ENCODE measurements at regions of chr1 and their contacts with region 1.

Region 1: DNA sequence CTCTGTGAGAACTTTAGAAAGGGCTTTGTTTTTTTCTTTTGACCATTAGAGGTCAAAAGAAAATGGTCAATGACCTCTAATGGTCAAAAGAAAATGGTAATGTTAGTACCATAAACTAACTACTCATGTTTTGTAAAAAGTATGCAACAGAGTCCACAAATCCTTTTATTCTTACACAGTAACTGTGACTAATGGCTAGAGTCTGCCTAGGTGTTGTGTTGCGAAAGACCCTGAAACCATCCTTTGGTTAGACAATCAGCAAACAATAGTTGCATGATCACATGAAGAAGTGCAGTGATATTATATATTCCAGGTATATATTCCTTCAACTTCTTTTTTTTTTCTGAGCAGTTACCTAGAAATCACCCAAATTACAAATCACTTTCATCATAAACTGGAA is 40.9 kb downstream of the NEGR1 start:
- DNase-seq: no peak
- H3K4me3 ChIP-seq: no peak overlapping the region
- H3K27ac ChIP-seq: no peak overlapping the region
- H3K4me1 ChIP-seq: no peaks in the 10 kb centered on the region
- H3K27me3 ChIP-seq: no peaks in the 10 kb centered on the region
- CTCF ChIP-seq: no peak
- POLR2A ChIP-seq: no peak

Region 2: DNA sequence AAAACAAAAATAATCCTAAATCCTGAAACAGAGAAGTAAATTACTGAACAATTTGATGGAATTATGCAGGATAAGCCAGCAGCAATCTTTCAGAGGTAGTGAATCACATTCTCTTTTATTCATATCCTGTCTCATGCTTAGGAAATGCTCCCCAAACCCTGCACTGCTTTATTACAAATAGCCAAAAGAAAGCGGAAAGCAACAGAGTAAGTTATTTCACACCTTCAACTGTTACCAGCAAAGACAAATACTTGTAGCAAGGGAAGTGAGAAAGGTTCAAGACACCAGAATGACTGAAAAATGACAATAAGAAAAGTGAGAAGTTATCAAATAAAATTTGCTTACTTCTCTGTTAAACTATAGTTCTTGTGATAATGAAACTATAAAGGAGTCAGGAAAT is 1166.7 kb before region 1 on chr1:
- intact Hi-C with region 1: no loop called
- DNase-seq: no peak
- H3K4me3 ChIP-seq: no peak overlapping the region
- H3K27ac ChIP-seq: no peak overlapping the region
- H3K4me1 ChIP-seq: peaks cover 12% of the 10 kb centered on the region
- H3K27me3 ChIP-seq: no peaks in the 10 kb centered on the region
- CTCF ChIP-seq: no peak
- POLR2A ChIP-seq: no peak

Region 3: DNA sequence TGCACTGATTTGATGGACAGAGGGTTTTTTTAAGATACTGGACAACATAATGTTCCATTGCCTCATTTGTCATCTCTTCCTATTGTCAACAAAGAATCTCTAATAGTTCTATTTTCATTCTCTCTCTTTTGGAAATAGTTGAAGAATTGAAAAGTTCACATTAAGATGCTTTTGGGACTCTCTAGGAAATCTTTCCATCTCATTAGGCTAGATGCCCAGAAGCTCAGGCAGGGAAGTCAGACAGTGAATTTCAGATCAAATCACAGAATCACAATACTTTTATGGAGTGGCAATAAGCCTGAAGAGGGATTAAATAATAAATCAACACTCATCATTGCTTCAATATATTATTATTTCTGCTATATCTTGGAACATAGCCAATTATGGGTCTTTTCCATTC is 11.7 kb after region 1 on chr1:
- intact Hi-C with region 1: loop called (anchors 2 kb)
- DNase-seq: no peak
- H3K4me3 ChIP-seq: no peak overlapping the region
- H3K27ac ChIP-seq: no peak overlapping the region
- H3K4me1 ChIP-seq: no peaks in the 10 kb centered on the region
- H3K27me3 ChIP-seq: no peaks in the 10 kb centered on the region
- CTCF ChIP-seq: no peak
- POLR2A ChIP-seq: no peak

Measured in vagina (tissue), 2 donors.